Natural killer cell (primary cell): ENCODE measurements at regions of chr1 and their contacts with region 1.

Region 1: GRCh38 chr1:212558693-212559480 is 49.7 kb upstream of the ATF3 start:
- DNase-seq: peak; percentile 91 to 97
- ATAC-seq: peak; percentile 92 to 96 (median 95)
- H3K4me3 ChIP-seq: peak overlapping the region; percentile 92
- H3K4me3 Mint-ChIP-seq: peak overlapping the region; percentile 91
- H3K27ac ChIP-seq: peak overlapping the region; percentile 93
- H3K27ac Mint-ChIP-seq: peak overlapping the region; percentile 90 to 96
- H3K4me1 ChIP-seq: peaks cover 14% of the 10 kb centered on the region
- H3K4me1 Mint-ChIP-seq: peaks cover 6 to 11% of the 10 kb centered on the region in 2 donors
- H3K27me3 ChIP-seq: no peaks in the 10 kb centered on the region
- H3K27me3 Mint-ChIP-seq: peaks cover 0 to 3% of the 10 kb centered on the region in 2 donors
- CTCF ChIP-seq: no peak

Region 2: DNA sequence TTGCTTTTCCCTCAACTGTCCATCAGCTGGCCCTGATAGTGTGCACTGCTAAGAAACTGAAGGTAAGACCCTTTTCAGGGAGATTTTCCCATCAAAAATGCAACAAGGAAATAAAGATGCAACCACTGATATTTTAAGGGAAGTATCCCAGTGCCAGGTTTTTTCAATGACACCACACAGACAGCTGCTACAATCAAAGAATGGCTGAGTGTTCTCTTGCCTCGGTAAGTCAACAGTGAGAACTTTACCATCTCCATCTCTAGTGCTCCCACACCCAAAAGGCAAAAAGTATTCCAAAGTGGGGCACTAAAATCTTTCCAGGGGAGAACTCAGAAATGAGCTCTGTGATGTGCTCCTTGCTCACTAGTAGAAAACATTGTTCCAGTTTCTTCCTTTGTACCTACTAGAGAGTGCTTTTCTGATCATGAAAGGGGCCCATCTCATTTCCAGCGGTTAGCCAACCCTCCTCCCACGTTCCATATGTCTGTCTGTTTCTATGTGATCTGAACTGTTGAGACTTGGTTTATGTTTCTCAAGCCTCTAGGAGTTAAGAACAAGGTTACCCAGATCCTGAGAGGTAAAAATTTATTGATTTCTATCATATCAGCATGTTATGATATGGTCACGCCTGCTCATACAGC is 815.9 kb before region 1 on chr1:
- intact Hi-C with region 1: no loop called
- DNase-seq: no peak
- ATAC-seq: no peak
- H3K4me3 ChIP-seq: no peak overlapping the region
- H3K4me3 Mint-ChIP-seq: no peak overlapping the region
- H3K27ac ChIP-seq: no peak overlapping the region
- H3K27ac Mint-ChIP-seq: peak overlapping the region; percentile 39 to 63
- H3K4me1 ChIP-seq: peaks cover 30% of the 10 kb centered on the region
- H3K4me1 Mint-ChIP-seq: peaks cover 24 to 29% of the 10 kb centered on the region in 2 donors
- H3K27me3 ChIP-seq: no peaks in the 10 kb centered on the region
- H3K27me3 Mint-ChIP-seq: no peaks in the 10 kb centered on the region
- CTCF ChIP-seq: no peak

Region 3: GRCh38 chr1:212368073-212368484 is 190.8 kb before region 1 on chr1:
- intact Hi-C with region 1: no loop called
- DNase-seq: peak; percentile 32 to 81
- ATAC-seq: peak; percentile 93 to 99 (median 95)
- H3K4me3 ChIP-seq: no peak overlapping the region
- H3K4me3 Mint-ChIP-seq: no peak overlapping the region
- H3K27ac ChIP-seq: no peak overlapping the region
- H3K27ac Mint-ChIP-seq: peak overlapping the region; percentile 75 to 77
- H3K4me1 ChIP-seq: no peaks in the 10 kb centered on the region
- H3K4me1 Mint-ChIP-seq: peaks cover 7 to 13% of the 10 kb centered on the region in 2 donors
- H3K27me3 ChIP-seq: no peaks in the 10 kb centered on the region
- H3K27me3 Mint-ChIP-seq: no peaks in the 10 kb centered on the region
- CTCF ChIP-seq: peak; percentile 74

Region 4: GRCh38 chr1:212514056-212514614 is 44.8 kb before region 1 on chr1:
- intact Hi-C with region 1: no loop called
- DNase-seq: peak in 1 of 2 donors; percentile 32
- ATAC-seq: peak; percentile 36 to 56 (median 50)
- H3K4me3 ChIP-seq: no peak overlapping the region
- H3K4me3 Mint-ChIP-seq: peak overlapping the region; percentile 6
- H3K27ac ChIP-seq: no peak overlapping the region
- H3K27ac Mint-ChIP-seq: no peak overlapping the region
- H3K4me1 ChIP-seq: peaks cover 16% of the 10 kb centered on the region
- H3K4me1 Mint-ChIP-seq: peaks cover 8 to 9% of the 10 kb centered on the region in 2 donors
- H3K27me3 ChIP-seq: peaks cover 29% of the 10 kb centered on the region
- H3K27me3 Mint-ChIP-seq: peaks cover 44 to 55% of the 10 kb centered on the region in 2 donors
- CTCF ChIP-seq: no peak

Region 5: GRCh38 chr1:212545941-212546635 is 12.8 kb before region 1 on chr1:
- intact Hi-C with region 1: no loop called
- DNase-seq: no peak
- ATAC-seq: no peak
- H3K4me3 ChIP-seq: no peak overlapping the region
- H3K4me3 Mint-ChIP-seq: no peak overlapping the region
- H3K27ac ChIP-seq: no peak overlapping the region
- H3K27ac Mint-ChIP-seq: no peak overlapping the region
- H3K4me1 ChIP-seq: no peaks in the 10 kb centered on the region
- H3K4me1 Mint-ChIP-seq: no peaks in the 10 kb centered on the region
- H3K27me3 ChIP-seq: peaks cover 4% of the 10 kb centered on the region
- H3K27me3 Mint-ChIP-seq: peaks cover 11 to 42% of the 10 kb centered on the region in 2 donors
- CTCF ChIP-seq: no peak

Region 6: DNA sequence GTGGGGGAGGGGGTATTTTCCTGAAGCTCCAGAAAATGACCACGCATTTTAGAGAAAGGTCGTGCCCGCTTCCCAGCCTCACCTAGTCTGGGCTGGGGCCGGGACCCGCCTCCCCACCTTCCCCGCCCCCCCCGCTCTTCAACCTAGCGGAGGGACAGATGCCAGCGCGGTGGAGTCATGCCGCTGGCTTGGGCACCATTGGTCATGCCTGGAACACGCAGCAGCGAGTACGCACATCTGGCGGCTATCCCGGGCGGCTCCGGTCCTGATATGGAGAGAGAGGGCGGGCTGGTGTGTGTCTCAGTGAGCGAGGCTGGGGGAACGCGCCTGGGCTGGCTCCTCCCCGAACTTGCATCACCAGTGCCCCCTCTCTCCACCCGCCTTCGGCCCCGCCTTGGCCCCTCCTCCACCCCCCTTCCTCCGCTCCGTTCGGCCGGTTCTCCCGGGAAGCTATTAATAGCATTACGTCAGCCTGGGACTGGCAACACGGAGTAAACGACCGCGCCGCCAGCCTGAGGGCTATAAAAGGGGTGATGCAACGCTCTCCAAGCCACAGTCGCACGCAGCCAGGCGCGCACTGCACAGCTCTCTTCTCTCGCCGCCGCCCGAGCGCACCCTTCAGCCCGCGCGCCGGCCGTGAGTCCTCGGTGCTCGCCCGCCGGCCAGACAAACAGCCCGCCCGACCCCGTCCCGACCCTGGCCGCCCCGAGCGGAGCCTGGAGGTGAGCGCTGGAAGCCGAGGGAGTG is 49.5 kb after region 1 on chr1 and contains the start of gene ATF3:
- intact Hi-C with region 1: loop called (anchors 1 kb)
- DNase-seq: peak; percentile 85 to 87
- ATAC-seq: peak; percentile 74 to 85 (median 75)
- H3K4me3 ChIP-seq: peak within 1 kb of the TSS; percentile 87
- H3K4me3 Mint-ChIP-seq: peak within 1 kb of the TSS; percentile 93
- H3K27ac ChIP-seq: peak within 1 kb of the TSS; percentile 76
- H3K27ac Mint-ChIP-seq: peak within 1 kb of the TSS; percentile 84 to 96
- H3K4me1 ChIP-seq: peaks cover 28% of the 10 kb centered on the region
- H3K4me1 Mint-ChIP-seq: peaks cover 21 to 39% of the 10 kb centered on the region in 2 donors
- H3K27me3 ChIP-seq: peaks cover 35% of the 10 kb centered on the region
- H3K27me3 Mint-ChIP-seq: peaks cover 51 to 58% of the 10 kb centered on the region in 2 donors
- CTCF ChIP-seq: no peak
- total RNA-seq, gene ATF3: 62.2 to 135 (median 78.5) TPM